Posterior vena cava (tissue), 2 donors: ENCODE measurements at regions of chr1 and their contacts with region 1.

Region 1: GRCh38 chr1:48789903-48790302 is 13.2 kb upstream of the BEND5 start:
- DNase-seq: no peak

Region 2: GRCh38 chr1:49416758-49417157 is 626.9 kb after region 1 on chr1:
- intact Hi-C with region 1: loop called in 1 of 2 experiments (anchors 10 kb)
- DNase-seq: no peak